ENCODE measurements at regions of chr1 and their contacts with region 1.

Region 1: DNA sequence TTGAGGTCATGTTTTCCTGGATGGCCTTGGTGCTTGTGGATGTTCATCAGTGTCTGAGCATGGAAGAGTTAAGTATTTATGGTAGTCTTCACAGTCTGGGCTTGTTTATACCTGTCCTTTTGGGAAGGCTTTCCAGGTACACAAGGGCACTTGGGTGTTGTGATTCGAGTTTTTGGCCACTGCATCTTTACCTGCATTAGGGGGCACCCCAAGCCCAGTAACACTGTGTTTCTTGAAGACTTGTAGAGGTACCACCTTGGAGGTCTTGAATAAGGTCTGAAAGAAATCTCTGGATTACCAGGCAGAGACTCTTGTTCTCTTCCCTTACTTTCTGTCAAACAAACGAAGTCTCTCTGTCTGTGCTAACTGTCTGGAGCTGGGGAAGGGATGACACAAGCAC is 34.4 kb upstream of the ROR1 start:
- DNase-seq: no peak
- H3K4me3 Mint-ChIP-seq: no peak overlapping the region
- H3K27ac Mint-ChIP-seq: no peak overlapping the region
- H3K4me1 Mint-ChIP-seq: no peaks in the 10 kb centered on the region
- H3K27me3 Mint-ChIP-seq: peaks cover 11% of the 10 kb centered on the region

Region 2: DNA sequence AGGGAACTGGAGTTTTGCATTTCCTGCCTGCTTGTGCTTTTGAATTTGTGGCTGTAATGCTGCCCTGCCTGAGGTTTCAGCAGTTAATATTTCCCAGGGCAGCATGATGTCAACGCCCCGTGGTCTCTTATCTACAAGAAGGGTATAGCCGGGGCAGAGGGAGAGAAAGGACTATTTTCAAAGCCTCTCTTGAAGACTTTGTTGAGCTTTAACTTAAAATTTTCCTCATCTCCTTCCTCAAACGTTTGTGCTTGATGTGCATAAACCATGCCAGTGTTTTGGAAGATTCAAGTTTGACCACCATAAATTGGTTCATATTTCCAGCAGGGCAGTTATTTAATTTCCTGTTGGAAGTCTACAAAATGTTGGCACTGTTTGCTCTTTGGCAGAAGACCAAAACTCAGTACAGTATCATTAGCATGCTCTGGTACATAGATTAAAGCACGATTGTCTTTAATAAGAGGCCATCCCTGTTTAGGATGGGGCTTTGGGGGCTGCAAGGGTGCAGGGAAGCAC is 77.8 kb after region 1 on chr1:
- CTCF ChIA-PET with region 1: no interaction called
- POLR2A ChIA-PET with region 1: no interaction called
- intact Hi-C with region 1: loop called (anchors 2 kb)
- DNase-seq: no peak
- H3K4me3 Mint-ChIP-seq: no peak overlapping the region
- H3K27ac Mint-ChIP-seq: no peak overlapping the region
- H3K4me1 Mint-ChIP-seq: no peaks in the 10 kb centered on the region
- H3K27me3 Mint-ChIP-seq: peaks cover 7% of the 10 kb centered on the region

Measured in activated CD4-positive, alpha-beta memory T cell treated with anti-CD3 and anti-CD28 coated beads for 36 hours (primary cell).